ENCODE measurements at regions of chr18 and their contacts with region 1.

Region 1: DNA sequence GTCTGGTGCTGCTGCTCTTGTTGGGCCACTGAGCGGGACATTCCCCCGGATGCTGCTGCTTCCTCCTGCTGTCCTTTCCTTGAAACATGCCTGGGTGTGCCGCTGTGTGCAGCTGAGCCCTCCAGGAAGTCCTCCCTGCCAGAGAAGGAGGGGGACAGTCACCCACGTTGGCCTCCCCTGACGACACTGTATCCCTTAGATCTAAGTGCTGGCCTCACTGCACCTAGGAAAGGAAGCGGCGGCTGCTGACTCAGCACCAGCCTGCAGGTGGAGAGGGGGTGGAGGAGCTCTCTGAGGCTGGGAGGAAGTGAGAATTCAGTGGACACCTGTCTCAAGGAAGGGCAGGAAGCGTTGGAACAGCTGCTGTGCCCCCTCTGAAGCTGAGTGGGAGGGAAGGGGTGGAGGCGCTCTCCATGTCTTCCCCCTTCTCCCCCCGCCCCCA is 239.8 kb downstream of the HAUS1 start:
- DNase-seq: no peak
- H3K4me3 ChIP-seq: no peak overlapping the region
- H3K27ac ChIP-seq: no peak overlapping the region
- H3K4me1 ChIP-seq: no peaks in the 10 kb centered on the region
- H3K27me3 ChIP-seq: no peaks in the 10 kb centered on the region
- CTCF ChIP-seq: no peak

Region 2: DNA sequence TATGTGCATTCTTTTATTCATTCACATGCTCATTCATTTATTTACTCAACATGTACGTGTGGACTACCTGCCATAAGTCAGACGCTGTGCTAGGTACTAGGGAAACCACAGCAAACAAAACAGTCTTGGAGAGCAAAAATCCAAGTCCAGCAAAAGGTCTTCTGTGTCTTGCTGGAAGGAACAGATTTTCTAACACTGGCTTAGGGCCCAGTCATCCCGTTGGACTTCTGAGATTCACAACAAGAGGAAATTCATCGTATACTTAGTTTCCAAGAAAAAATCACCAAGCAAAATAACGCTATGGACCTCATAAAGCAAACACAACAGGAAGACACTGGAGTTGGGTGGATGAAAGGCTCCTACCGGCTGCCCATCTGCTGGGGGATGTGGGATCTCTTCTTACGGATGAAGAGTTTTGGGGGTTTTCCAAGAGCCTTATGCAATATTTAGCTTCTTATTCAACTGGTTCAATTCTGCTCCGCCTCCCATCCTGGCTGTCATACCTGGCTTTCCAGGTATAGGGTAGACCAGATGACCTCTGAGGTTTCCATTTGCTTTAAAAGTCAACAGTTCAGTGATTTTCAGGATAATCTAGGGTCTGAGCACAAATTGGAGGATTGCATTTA is 22.9 kb after region 1 on chr18:
- CTCF ChIA-PET with region 1: no interaction called
- POLR2A ChIA-PET with region 1: no interaction called
- intact Hi-C with region 1: loop called (anchors 1 kb)
- DNase-seq: no peak
- H3K4me3 ChIP-seq: no peak overlapping the region
- H3K27ac ChIP-seq: no peak overlapping the region
- H3K4me1 ChIP-seq: peaks cover 5% of the 10 kb centered on the region
- H3K27me3 ChIP-seq: no peaks in the 10 kb centered on the region
- CTCF ChIP-seq: no peak

Region 3: DNA sequence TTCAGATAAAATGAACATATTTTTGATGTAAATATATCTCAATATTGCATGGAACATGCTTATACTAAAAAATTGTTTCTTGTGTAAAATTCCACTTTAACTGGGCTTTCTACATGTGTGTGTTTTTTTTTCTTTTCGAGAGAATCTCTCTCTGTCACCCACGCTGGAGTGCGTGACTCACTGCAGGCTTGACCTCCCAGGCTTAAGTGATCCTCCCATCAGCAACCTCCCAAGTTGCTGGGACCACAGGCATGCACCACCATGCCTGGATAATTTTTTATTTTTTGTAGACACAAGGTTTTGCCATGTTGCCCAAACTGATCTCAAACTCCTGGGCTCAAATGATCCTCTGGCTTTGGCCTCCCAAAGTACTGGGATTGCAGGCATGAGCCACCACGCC is 58.4 kb after region 1 on chr18:
- CTCF ChIA-PET with region 1: no interaction called
- POLR2A ChIA-PET with region 1: no interaction called
- intact Hi-C with region 1: no loop called
- DNase-seq: no peak
- H3K4me3 ChIP-seq: no peak overlapping the region
- H3K27ac ChIP-seq: no peak overlapping the region
- H3K4me1 ChIP-seq: no peaks in the 10 kb centered on the region
- H3K27me3 ChIP-seq: no peaks in the 10 kb centered on the region
- CTCF ChIP-seq: no peak

Measured in A673 (cell line).